Aorta (tissue), 5 donors: ENCODE measurements at regions of chr13 and their contacts with region 1.

Region 1: GRCh38 chr13:109243311-109243951 is 543.0 kb downstream of the IRS2 start:
- DNase-seq: no peak
- ATAC-seq: peak; percentile 50
- H3K4me3 ChIP-seq: peak overlapping the region in 1 of 2 donors; percentile 18
- H3K27ac ChIP-seq: peak overlapping the region; percentile 49 to 97
- H3K4me1 ChIP-seq: peaks cover 1 to 2% of the 10 kb centered on the region in 2 donors
- H3K27me3 ChIP-seq: no peaks in the 10 kb centered on the region

Region 2: DNA sequence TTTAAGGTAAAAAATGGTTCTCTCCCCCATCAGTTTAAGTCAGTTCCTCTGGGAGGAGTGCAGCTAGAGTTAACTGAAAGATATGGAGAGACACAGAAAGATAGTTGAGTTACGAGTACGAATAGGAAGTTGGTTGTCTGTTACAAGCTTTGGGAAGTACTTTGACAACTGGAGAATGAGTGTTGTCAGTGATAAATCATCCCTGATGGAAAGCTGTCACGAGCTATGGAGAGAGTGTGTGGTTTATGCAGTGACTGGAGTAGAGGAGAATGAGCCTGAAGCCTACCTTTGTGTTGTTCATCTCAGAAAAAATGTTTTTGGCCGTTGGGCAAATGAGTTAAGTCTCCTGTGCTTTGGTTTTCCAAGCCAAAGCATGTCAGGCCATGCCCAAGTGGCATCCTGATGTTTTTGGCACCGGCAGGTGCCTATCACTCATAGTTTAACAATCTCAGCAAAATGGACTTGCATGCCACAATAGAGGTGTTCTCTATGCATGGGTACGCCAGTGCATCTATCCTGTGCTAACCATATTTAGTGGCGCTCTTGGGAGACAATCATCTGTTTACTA is 192.7 kb after region 1 on chr13:
- intact Hi-C with region 1: loop called in 1 of 2 experiments (anchors 10 kb)
- DNase-seq: no peak
- ATAC-seq: no peak
- H3K4me3 ChIP-seq: no peak overlapping the region
- H3K27ac ChIP-seq: no peak overlapping the region
- H3K4me1 ChIP-seq: no peaks in the 10 kb centered on the region
- H3K27me3 ChIP-seq: no peaks in the 10 kb centered on the region